Heart left ventricle (tissue), 16 donors: ENCODE measurements at regions of chr7 and their contacts with region 1.

Region 1: DNA sequence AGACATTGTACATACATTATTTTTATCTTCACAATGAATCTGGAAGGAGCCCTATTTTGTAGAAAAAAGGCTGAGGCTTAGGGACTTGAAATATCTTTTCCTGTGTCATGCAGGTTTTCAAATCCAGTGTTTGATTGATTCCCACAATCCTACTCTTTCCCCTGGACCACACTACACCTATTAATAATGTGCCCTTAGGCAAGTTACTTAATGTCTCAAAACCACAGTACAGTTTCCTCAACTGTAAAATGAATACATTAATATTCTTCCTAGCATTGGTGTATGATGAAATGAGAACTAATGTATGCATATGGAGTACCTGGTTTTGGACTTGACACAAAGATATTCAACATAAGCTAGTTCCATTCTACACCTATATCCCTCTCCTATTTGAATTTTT is 313.3 kb upstream of the SP8 start:
- DNase-seq: no peak
- ATAC-seq: no peak
- H3K4me3 ChIP-seq: no peak overlapping the region
- H3K27ac ChIP-seq: no peak overlapping the region
- H3K4me1 ChIP-seq: no peaks in the 10 kb centered on the region
- H3K27me3 ChIP-seq: no peaks in the 10 kb centered on the region
- CTCF ChIP-seq: no peak
- POLR2A ChIP-seq: no peak

Region 2: GRCh38 chr7:21086688-21087087 is 13.3 kb before region 1 on chr7:
- intact Hi-C with region 1: loop called in 1 of 10 experiments (anchors 2 kb)
- DNase-seq: no peak
- ATAC-seq: no peak
- H3K4me3 ChIP-seq: no peak overlapping the region
- H3K27ac ChIP-seq: no peak overlapping the region
- H3K4me1 ChIP-seq: no peaks in the 10 kb centered on the region
- H3K27me3 ChIP-seq: no peaks in the 10 kb centered on the region
- CTCF ChIP-seq: no peak
- POLR2A ChIP-seq: no peak

Region 3: DNA sequence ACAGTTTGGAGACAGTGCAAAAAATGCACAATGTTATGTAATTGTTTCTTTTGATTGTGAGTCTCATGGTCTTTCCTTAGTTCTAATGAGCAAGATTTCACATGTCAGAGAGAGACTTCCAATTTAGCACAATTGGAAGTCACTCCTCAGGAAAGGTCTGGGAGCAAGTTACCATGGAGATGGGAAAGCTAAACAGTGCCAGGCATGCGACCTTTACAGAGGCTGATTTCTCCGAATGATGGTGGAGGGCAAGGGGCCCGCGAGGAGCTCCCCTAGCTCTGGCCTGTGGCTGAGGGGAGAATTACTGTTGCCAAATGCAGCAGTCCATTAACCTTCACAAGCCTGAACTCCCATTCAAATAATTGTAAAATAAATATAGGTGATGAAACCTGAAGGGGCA is 786.4 kb after region 1 on chr7:
- intact Hi-C with region 1: no loop called
- DNase-seq: no peak
- ATAC-seq: no peak
- H3K4me3 ChIP-seq: no peak overlapping the region
- H3K27ac ChIP-seq: no peak overlapping the region
- H3K4me1 ChIP-seq: peaks cover 0 to 7% (median 0%) of the 10 kb centered on the region in 12 donors
- H3K27me3 ChIP-seq: no peaks in the 10 kb centered on the region
- CTCF ChIP-seq: no peak
- POLR2A ChIP-seq: no peak